Dendritic cell treated with granulocyte-macrophage colony-stimulating factor and Interleukin-4, amounts not matched to agents 40 ng/mL and 50 ng/mL, for 4 days (primary cell): ENCODE measurements at regions of chr18 and their contacts with region 1.

Region 1: GRCh38 chr18:5787936-5788335 is 107.4 kb downstream of the TMEM200C start:
- H3K4me3 Mint-ChIP-seq: no peak overlapping the region
- H3K27ac Mint-ChIP-seq: no peak overlapping the region
- H3K4me1 Mint-ChIP-seq: no peaks in the 10 kb centered on the region
- H3K27me3 Mint-ChIP-seq: no peaks in the 10 kb centered on the region

Region 2: DNA sequence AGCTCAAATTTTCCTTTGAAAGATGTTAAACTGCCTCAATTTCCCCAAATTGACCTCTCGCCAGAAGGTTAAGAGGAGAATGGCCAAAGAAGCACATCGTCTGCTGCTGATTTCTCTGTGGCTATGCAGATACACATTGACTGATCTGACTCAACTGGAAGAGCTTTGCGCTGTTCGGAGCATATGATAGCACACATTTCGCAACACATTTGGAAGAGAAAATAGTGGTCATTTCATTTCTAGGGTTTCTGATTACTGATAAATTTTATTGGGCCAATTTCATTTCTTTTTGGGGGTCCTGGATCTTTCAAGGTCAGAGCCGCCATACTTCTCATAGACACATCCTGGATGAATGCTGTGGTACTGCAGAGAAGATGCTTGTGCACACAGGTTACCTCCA is 31.1 kb before region 1 on chr18:
- intact Hi-C with region 1: loop called (anchors 1 kb)
- H3K4me3 Mint-ChIP-seq: no peak overlapping the region
- H3K27ac Mint-ChIP-seq: no peak overlapping the region
- H3K4me1 Mint-ChIP-seq: no peaks in the 10 kb centered on the region
- H3K27me3 Mint-ChIP-seq: peaks cover 4% of the 10 kb centered on the region